ENCODE measurements at regions of chr11 and their contacts with region 1.

Region 1: DNA sequence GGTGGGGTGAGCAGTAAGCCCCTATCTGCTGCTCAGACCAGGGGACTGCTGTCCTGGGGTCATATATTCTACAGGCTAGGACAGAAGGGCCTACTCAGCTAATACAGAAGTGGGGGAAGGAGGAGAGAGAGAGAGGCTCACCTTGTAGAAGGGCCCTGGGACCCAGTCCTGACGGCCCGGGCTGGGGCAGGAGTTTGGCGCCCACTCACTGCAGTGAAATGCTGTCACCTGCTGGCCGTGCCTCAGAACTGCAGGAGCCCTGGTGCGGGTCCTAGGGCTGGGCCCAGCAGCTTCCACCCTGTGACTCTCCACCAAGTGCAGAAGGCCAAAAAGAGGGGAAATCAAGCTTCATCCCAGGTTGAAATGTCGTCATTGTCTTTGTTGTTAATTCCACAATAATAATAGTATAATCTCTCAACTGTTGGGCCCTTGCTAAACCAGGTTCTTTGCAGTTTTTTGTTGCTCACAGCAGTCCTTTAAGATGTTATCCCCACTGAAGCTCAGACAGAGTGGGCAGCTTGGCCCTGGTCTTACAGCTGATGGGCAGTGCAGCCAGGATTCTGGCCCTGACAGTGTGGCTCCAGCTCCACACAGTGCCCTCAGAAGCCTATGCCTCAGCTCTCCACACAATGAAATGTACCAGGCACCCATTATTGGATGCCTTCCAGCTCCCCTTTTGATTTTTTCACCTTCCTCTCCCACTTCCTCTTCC is 29.6 kb downstream of the TRIM29 start:
- DNase-seq: peak; percentile 56
- ATAC-seq: peak; percentile 91
- H3K4me3 ChIP-seq: no peak overlapping the region
- H3K27ac ChIP-seq: no peak overlapping the region
- H3K4me1 ChIP-seq: no peaks in the 10 kb centered on the region
- H3K27me3 ChIP-seq: peaks cover 7% of the 10 kb centered on the region
- CTCF ChIP-seq: peak; percentile 100

Region 2: DNA sequence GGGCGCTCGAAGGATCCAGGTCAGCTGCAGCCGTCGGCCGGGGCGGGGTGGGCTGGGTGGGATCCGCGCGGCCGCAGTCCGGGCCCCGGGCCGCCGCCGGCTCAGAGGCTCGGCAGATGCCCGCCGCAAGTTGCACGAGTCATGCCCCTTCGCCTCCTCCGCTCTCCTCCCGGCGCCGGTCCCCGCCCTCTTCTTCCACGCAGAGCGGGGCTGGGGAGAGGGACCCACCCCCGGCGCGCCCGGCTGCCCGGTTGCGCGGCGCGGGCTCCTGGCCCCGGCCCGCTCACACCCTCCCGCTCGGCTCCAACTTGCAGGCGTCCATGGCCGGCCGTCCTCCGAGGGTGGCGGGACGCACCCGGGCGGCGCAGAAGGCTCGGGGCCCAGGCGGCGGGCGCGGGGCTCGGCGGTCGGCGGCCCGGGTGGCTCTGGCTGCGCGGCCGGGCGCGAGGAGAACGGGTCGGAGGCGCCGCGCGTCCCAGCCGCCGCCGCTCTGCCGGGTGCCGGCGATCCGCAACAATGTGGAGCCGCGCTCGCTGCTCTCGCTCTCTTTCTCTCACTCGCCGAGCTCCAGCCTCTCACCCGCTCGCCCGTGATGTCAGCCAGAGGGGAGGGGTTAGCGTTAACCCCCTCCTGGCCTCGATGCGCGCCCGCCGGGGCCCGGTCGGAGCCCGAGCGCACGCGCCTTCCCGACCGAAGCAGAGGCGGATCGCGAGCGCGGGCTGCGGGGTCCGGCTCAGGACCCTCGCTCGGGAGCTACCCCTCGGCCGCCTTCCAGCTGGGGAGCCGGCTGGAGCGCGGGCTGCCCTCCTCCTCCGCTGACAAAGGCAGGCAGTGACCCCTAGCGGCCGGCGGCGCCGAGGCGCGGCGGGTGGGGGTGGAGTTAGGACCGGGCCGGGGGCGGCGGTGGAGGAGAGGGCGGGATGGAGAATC is 379.4 kb before region 1 on chr11 and contains the start of gene NECTIN1:
- CTCF ChIA-PET with region 1: interaction called, 8 read pairs
- POLR2A ChIA-PET with region 1: no interaction called
- in situ Hi-C with region 1: no loop called
- intact Hi-C with region 1: loop called (anchors 10 kb)
- DNase-seq: peak; percentile 39
- ATAC-seq: peak; percentile 96
- H3K4me3 ChIP-seq: peak within 1 kb of the TSS; percentile 51 to 65
- H3K27ac ChIP-seq: peak within 1 kb of the TSS; percentile 71
- H3K4me1 ChIP-seq: peaks cover 15% of the 10 kb centered on the region
- H3K27me3 ChIP-seq: peaks cover 6% of the 10 kb centered on the region
- CTCF ChIP-seq: peak; percentile 100
- total RNA-seq, gene NECTIN1: 14.6 TPM

Region 3: GRCh38 chr11:119863236-119863635 is 245.1 kb before region 1 on chr11:
- CTCF ChIA-PET with region 1: interaction called, 12 read pairs
- POLR2A ChIA-PET with region 1: no interaction called
- in situ Hi-C with region 1: no loop called
- intact Hi-C with region 1: no loop called
- DNase-seq: no peak
- ATAC-seq: no peak
- H3K4me3 ChIP-seq: no peak overlapping the region
- H3K27ac ChIP-seq: no peak overlapping the region
- H3K4me1 ChIP-seq: no peaks in the 10 kb centered on the region
- H3K27me3 ChIP-seq: peaks cover 20% of the 10 kb centered on the region
- CTCF ChIP-seq: no peak

Region 4: DNA sequence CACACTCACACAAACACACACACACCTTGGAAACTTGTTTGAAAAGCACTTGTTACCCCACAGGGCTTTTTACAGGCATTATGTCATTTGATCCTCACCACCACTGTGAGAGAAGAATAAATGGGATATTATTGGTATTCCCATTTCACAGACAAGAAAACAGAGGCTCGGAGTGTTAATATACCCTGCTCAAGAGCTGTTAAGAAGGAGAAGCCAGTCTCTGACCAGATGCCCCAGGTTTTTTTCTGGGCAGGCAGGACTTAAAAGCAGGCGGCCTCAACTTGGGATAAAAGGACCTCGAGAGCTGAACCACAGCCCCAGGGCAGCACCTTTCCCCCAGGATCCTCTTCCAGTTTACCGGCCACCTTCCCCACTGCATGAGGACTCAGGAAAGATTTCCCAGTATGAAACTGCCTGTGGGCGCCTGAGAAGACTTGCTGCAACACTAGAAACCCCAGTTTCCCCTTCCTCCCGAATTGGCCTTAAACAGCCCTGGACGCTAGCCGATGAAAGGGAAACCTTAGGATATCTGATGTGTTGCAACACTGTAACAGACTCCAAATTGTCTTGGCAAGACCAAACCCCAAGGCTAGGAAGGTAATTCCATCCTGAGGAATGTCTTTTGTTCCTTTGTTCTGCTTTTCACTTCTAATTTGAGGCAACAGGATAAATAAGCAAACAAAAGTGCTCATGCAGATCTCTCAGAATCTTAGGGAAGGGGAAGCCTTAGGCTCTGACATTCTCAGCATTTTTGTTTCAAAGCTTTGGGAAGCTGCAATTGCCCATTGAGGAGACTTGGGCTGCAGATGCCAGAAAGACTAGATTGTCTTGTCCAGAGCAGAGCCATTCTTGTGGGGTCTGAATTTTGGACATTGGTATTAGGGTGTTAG is 143.9 kb before region 1 on chr11:
- CTCF ChIA-PET with region 1: no interaction called
- POLR2A ChIA-PET with region 1: no interaction called
- in situ Hi-C with region 1: no loop called
- intact Hi-C with region 1: no loop called
- DNase-seq: no peak
- ATAC-seq: no peak
- H3K4me3 ChIP-seq: no peak overlapping the region
- H3K27ac ChIP-seq: no peak overlapping the region
- H3K4me1 ChIP-seq: no peaks in the 10 kb centered on the region
- H3K27me3 ChIP-seq: peaks cover 37% of the 10 kb centered on the region
- CTCF ChIP-seq: no peak

Region 5: DNA sequence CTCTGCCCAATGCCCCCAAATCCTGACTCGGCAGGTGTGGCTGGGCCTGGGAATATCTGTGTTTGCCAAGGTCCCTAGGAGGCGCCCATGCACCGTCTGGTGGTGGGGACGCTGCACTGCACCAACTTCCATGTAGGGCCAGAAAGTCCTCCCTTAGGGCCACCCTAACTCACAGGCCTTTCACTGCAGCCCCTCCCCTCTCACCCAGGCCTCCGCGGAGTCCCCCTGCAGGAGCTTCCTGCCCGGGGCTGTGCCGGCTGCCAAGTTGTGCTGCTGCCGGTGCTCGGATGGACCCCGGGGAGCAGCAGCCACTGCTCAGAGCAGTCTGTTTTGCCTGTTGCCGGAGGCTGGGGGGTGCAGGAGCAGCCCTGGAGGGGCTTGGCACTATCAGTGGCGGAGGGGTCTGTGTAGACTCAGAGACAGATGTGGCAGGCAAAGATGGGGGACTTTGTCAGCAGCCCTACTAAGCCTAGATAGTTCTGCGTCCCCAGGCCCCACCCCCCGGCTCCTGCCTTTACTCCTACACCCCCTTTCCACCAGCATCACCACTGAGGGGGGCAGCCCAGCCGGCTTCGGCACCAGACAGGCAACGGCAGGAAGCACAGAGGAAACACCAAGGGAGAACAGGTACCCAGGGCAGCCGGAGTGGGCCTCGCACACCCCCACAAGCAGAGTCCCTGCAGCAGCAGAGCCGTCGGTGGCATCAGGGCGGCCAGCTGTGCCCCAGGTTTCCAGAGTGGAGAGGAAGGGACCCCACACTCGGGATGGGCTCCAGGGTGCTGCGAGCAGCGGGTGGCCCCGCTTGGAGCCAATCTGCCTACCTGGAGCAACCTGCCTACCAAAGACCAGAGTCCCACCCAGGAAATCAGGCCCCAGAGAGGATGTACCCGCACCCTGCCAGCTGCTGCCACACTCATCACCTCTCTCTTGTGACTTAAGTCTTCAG is 94.7 kb before region 1 on chr11:
- CTCF ChIA-PET with region 1: no interaction called
- POLR2A ChIA-PET with region 1: no interaction called
- in situ Hi-C with region 1: no loop called
- intact Hi-C with region 1: loop called (anchors 5 kb)
- DNase-seq: peak; percentile 8
- ATAC-seq: peak; percentile 92
- H3K4me3 ChIP-seq: no peak overlapping the region
- H3K27ac ChIP-seq: no peak overlapping the region
- H3K4me1 ChIP-seq: no peaks in the 10 kb centered on the region
- H3K27me3 ChIP-seq: peaks cover 59% of the 10 kb centered on the region
- CTCF ChIP-seq: peak; percentile 95

Region 6: GRCh38 chr11:120061761-120062560 is 46.3 kb before region 1 on chr11:
- CTCF ChIA-PET with region 1: no interaction called
- POLR2A ChIA-PET with region 1: no interaction called
- in situ Hi-C with region 1: no loop called
- intact Hi-C with region 1: no loop called
- DNase-seq: no peak
- ATAC-seq: no peak
- H3K4me3 ChIP-seq: no peak overlapping the region
- H3K27ac ChIP-seq: no peak overlapping the region
- H3K4me1 ChIP-seq: no peaks in the 10 kb centered on the region
- H3K27me3 ChIP-seq: peaks cover 23% of the 10 kb centered on the region
- CTCF ChIP-seq: no peak